Vagina (tissue), 2 donors: ENCODE measurements at regions of chr22 and their contacts with region 1.

Region 1: GRCh38 chr22:43273902-43274484 is 69.2 kb downstream of the SCUBE1 start:
- DNase-seq: no peak
- H3K4me3 ChIP-seq: no peak overlapping the region
- H3K27ac ChIP-seq: no peak overlapping the region
- H3K4me1 ChIP-seq: no peaks in the 10 kb centered on the region
- H3K27me3 ChIP-seq: no peaks in the 10 kb centered on the region
- CTCF ChIP-seq: peak; percentile 11 to 73 (median 68)
- POLR2A ChIP-seq: no peak

Region 2: GRCh38 chr22:43060183-43060582 is 213.8 kb before region 1 on chr22:
- intact Hi-C with region 1: no loop called
- DNase-seq: no peak
- H3K4me3 ChIP-seq: no peak overlapping the region
- H3K27ac ChIP-seq: no peak overlapping the region
- H3K4me1 ChIP-seq: no peaks in the 10 kb centered on the region
- H3K27me3 ChIP-seq: no peaks in the 10 kb centered on the region
- CTCF ChIP-seq: peak in 1 of 3 experiments; percentile 26
- POLR2A ChIP-seq: no peak

Region 3: GRCh38 chr22:43337385-43337784 is 63.4 kb after region 1 on chr22:
- intact Hi-C with region 1: loop called (anchors 5 kb)
- DNase-seq: no peak
- H3K4me3 ChIP-seq: no peak overlapping the region
- H3K27ac ChIP-seq: no peak overlapping the region
- H3K4me1 ChIP-seq: peaks cover 2% of the 10 kb centered on the region
- H3K27me3 ChIP-seq: no peaks in the 10 kb centered on the region
- CTCF ChIP-seq: no peak
- POLR2A ChIP-seq: no peak

Region 4: GRCh38 chr22:43385770-43386641 is 112.0 kb after region 1 on chr22:
- intact Hi-C with region 1: loop called (anchors 5 kb)
- DNase-seq: no peak
- H3K4me3 ChIP-seq: no peak overlapping the region
- H3K27ac ChIP-seq: no peak overlapping the region
- H3K4me1 ChIP-seq: no peaks in the 10 kb centered on the region
- H3K27me3 ChIP-seq: no peaks in the 10 kb centered on the region
- CTCF ChIP-seq: peak; percentile 77 to 82 (median 77)
- POLR2A ChIP-seq: no peak

Region 5: DNA sequence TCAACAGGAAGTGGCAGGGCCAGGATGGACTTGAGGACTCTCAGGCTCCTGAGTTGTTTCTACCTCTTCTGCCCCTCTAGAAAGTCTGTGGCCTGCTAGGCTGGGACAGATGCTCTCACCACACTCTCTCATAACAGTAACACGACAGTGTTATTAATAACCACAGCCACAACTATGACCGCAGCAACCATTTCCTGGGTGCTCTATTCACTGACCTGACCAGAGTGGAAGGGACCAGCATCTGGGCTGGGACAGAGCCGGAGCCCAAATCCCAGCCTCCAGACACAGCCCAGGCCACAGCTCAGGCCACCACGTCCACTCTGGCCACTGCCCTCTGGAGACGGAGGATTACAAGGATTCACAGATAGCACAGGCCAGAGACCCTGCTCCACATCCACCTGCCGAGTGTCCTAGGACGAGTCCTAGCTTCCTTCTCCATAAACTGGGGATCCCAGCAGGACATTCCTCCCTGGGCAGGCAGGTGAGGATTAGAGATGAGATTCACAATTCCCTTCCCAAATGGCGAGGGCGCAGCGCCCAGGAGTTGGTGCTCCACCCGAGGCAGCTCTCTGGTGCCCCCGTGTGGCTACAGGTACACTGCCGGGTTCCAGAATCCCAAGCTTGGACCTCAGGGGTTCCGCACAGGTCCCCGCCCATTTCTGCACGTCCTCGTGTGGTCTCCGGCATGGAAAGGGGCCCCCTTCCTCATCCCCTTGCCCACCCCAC is 610.8 kb after region 1 on chr22:
- intact Hi-C with region 1: loop called (anchors 10 kb)
- DNase-seq: no peak
- H3K4me3 ChIP-seq: no peak overlapping the region
- H3K27ac ChIP-seq: no peak overlapping the region
- H3K4me1 ChIP-seq: no peaks in the 10 kb centered on the region
- H3K27me3 ChIP-seq: no peaks in the 10 kb centered on the region
- CTCF ChIP-seq: peak in 2 of 3 experiments; percentile 38 to 56
- POLR2A ChIP-seq: no peak